Aorta (tissue), 5 donors: ENCODE measurements at regions of chr20 and their contacts with region 1.

Region 1: GRCh38 chr20:12970372-12970821 is 38.4 kb upstream of the SPTLC3 start:
- DNase-seq: no peak
- ATAC-seq: peak; percentile 68
- H3K4me3 ChIP-seq: no peak overlapping the region
- H3K27ac ChIP-seq: no peak overlapping the region
- H3K4me1 ChIP-seq: no peaks in the 10 kb centered on the region
- H3K27me3 ChIP-seq: no peaks in the 10 kb centered on the region

Region 2: GRCh38 chr20:13105864-13106457 is 135.6 kb after region 1 on chr20:
- intact Hi-C with region 1: loop called (anchors 2 to 5 kb)
- DNase-seq: no peak
- ATAC-seq: no peak
- H3K4me3 ChIP-seq: no peak overlapping the region
- H3K27ac ChIP-seq: no peak overlapping the region
- H3K4me1 ChIP-seq: no peaks in the 10 kb centered on the region
- H3K27me3 ChIP-seq: no peaks in the 10 kb centered on the region